H1 (cell line): ENCODE measurements at regions of chr5 and their contacts with region 1.

Region 1: DNA sequence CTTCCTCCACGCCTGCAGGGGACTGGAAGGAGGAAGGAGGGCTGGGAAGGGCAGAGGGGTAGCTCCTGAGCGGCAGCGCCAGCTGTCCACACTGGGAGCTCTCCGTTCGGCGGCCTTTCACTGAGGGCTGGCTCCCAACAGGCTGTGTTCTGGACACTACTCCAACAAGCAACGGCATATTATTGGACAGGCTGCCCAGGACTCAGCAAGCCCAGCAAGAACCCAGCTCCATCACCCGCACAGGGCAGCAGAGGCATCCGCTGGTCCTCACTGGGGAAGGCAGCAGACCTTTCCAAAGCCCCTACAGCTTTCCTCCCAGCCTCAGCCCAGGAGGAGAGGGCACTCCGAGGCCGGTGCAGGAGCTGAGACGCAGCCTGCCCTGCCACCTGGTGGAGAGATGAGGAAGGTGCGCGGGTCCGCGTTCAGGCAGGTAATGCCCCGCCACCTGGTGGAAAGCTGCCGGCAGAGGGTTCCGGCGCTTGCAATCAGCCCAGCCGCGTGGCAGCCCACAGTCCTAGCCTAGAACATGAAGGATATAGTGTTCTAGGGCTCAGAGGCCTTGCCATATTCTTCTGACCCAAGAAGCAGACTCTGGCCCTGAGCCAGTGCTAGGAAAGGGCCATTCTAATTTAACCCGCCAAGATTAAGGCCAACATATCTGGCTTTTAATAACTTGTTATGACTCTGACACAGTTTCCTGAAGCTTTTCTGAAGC is 74.4 kb downstream of the NRG2 start:
- DNase-seq: peak; percentile 74 to 99
- H3K4me3 ChIP-seq: no peak overlapping the region
- H3K27ac ChIP-seq: no peak overlapping the region
- H3K4me1 ChIP-seq: no peaks in the 10 kb centered on the region
- H3K27me3 ChIP-seq: no peaks in the 10 kb centered on the region; a peak in 1 of 7 replicates
- CTCF ChIP-seq: peak; percentile 100
- EP300 ChIP-seq: peak in 1 of 2 experiments; percentile 55; a peak in 1 of 3 replicates
- POLR2A ChIP-seq: no peak
- RAD21 ChIP-seq: peak; percentile 99 to 100

Region 2: DNA sequence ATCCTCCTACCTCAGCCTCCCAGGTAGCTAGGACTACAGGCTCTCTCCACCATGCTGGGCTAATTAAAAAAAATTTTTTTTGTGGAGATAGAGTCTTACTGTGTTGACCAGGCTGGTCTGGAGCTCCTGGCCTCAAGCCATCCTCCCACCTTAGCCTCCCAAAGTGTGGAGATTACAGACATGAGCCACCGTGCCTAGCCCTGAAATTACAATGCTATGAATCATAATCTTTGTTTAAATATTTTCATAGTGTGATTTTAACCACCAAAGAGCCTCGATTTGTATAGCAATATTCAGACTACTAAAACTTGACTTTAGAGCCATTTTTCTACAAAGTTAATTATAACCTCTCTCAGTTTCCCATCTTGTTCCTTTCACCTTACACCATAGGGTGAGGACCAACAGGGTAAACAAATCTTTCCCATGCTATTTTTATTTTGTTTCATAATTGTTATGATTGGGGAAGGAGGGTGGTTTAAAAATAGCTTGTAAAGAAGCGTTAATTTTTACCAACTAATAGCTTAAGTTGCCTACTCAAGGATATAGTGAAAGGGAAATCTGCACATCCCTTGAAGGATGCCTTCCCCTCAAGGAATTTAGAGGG is 374.9 kb before region 1 on chr5:
- CTCF ChIA-PET with region 1: no interaction called
- POLR2A ChIA-PET with region 1: no interaction called
- DNase-seq: no peak
- H3K4me3 ChIP-seq: no peak overlapping the region
- H3K27ac ChIP-seq: no peak overlapping the region
- H3K4me1 ChIP-seq: peaks cover 0 to 2% (median 0%) of the 10 kb centered on the region in 4 experiments; a peak in 1 of 7 replicates
- H3K27me3 ChIP-seq: no peaks in the 10 kb centered on the region
- CTCF ChIP-seq: no peak
- EP300 ChIP-seq: no peak
- POLR2A ChIP-seq: no peak
- RAD21 ChIP-seq: no peak

Region 3: GRCh38 chr5:139787568-139788293 is 181.0 kb before region 1 on chr5:
- CTCF ChIA-PET with region 1: interaction called, 276 read pairs
- POLR2A ChIA-PET with region 1: no interaction called
- DNase-seq: peak in 1 of 2 experiments; percentile 100
- H3K4me3 ChIP-seq: peak overlapping the region; percentile 39 to 82 (median 66)
- H3K27ac ChIP-seq: no peak overlapping the region
- H3K4me1 ChIP-seq: peaks cover 0 to 5% (median 5%) of the 10 kb centered on the region in 4 experiments; a peak in 5 of 7 replicates
- H3K27me3 ChIP-seq: peaks cover 0 to 22% (median 16%) of the 10 kb centered on the region in 4 experiments; a peak in 5 of 7 replicates
- CTCF ChIP-seq: peak in 2 of 3 experiments; percentile 95 to 98; a peak in 3 of 4 replicates
- EP300 ChIP-seq: no peak
- POLR2A ChIP-seq: no peak
- RAD21 ChIP-seq: peak; percentile 96 to 99

Region 4: DNA sequence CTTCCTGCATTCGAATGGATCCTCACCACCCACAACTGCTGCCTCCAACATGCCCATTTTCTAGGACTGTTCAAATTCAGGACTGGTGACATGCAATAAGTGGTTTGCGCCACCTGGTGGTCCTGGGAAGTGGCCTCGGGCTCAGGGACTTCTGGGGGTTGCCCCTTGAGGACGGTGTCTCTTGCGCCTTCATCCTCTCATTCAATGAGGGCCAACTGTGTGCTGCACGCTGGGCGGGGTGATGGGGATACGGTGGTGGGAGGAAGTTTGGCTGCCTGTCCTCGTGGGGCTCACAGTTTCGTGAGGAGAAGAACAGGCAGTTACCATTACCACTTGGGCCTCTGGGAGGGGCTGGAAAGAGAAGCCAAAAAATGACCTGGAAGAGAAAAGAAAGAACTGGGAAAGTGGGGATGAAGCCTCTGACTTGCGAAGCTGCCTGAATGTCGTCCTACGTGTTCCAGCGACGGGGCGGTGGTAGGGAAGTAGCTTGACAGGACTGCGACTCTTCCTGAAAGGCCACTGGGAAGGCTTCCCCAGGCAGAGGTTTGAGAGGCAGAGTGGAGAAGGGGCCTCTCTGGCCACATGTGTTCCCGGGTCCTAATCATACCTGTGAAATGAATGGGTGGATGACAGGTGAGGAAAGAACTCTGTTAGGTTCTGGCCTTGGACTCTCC is 124.1 kb before region 1 on chr5:
- CTCF ChIA-PET with region 1: interaction called, 66 read pairs
- POLR2A ChIA-PET with region 1: interaction called, 3 read pairs
- DNase-seq: peak; percentile 64 to 92
- H3K4me3 ChIP-seq: no peak overlapping the region
- H3K27ac ChIP-seq: no peak overlapping the region
- H3K4me1 ChIP-seq: peaks cover 0 to 2% (median 1%) of the 10 kb centered on the region in 4 experiments; a peak in 5 of 7 replicates
- H3K27me3 ChIP-seq: peaks cover 16 to 50% (median 44%) of the 10 kb centered on the region in 4 experiments
- CTCF ChIP-seq: peak; percentile 93 to 97 (median 96)
- EP300 ChIP-seq: no peak
- POLR2A ChIP-seq: no peak
- RAD21 ChIP-seq: peak; percentile 88 to 90

Region 5: GRCh38 chr5:139895647-139896046 is 73.1 kb before region 1 on chr5:
- CTCF ChIA-PET with region 1: interaction called, 181 read pairs
- POLR2A ChIA-PET with region 1: no interaction called
- DNase-seq: no peak
- H3K4me3 ChIP-seq: no peak overlapping the region
- H3K27ac ChIP-seq: no peak overlapping the region
- H3K4me1 ChIP-seq: no peaks in the 10 kb centered on the region
- H3K27me3 ChIP-seq: peaks cover 4 to 27% (median 17%) of the 10 kb centered on the region in 4 experiments
- CTCF ChIP-seq: no peak
- EP300 ChIP-seq: no peak
- POLR2A ChIP-seq: no peak
- RAD21 ChIP-seq: no peak

Region 6: DNA sequence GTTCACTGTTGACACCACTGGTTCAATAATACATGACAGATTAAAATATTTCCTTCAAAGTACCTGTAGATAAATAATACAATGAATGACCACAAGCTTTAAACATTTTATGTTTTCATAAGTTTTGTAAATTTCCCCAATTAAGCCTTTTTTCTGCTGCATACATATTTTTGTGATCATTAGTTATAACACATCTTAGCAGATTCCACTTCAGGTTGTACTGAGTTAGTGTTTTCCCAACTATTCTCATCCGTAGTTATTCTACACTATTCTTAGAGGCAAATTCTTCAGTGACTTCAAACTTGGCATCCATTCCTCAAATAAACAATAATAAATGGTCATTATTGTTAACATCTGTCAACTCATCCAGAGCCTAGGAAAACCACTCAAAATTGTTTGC is 26.5 kb before region 1 on chr5:
- CTCF ChIA-PET with region 1: interaction called, 32 read pairs
- POLR2A ChIA-PET with region 1: no interaction called
- DNase-seq: no peak
- H3K4me3 ChIP-seq: no peak overlapping the region
- H3K27ac ChIP-seq: no peak overlapping the region
- H3K4me1 ChIP-seq: no peaks in the 10 kb centered on the region
- H3K27me3 ChIP-seq: no peaks in the 10 kb centered on the region; a peak in 1 of 7 replicates
- CTCF ChIP-seq: no peak
- EP300 ChIP-seq: no peak
- POLR2A ChIP-seq: no peak
- RAD21 ChIP-seq: no peak

Region 7: GRCh38 chr5:140007311-140007710 is 38.6 kb after region 1 on chr5:
- CTCF ChIA-PET with region 1: interaction called, 35 read pairs
- POLR2A ChIA-PET with region 1: no interaction called
- DNase-seq: no peak
- H3K4me3 ChIP-seq: no peak overlapping the region
- H3K27ac ChIP-seq: no peak overlapping the region
- H3K4me1 ChIP-seq: no peaks in the 10 kb centered on the region
- H3K27me3 ChIP-seq: peaks cover 0 to 7% (median 0%) of the 10 kb centered on the region in 4 experiments; a peak in 1 of 7 replicates
- CTCF ChIP-seq: no peak
- EP300 ChIP-seq: no peak
- POLR2A ChIP-seq: no peak
- RAD21 ChIP-seq: no peak